Left lung (tissue), 14 donors: ENCODE measurements at regions of chr2 and their contacts with region 1.

Region 1: GRCh38 chr2:26144953-26145680 is 27.8 kb upstream of the GAREM2 start:
- DNase-seq: peak in 3 of 4 donors; percentile 47 to 64 (median 49)
- ATAC-seq: peak; percentile 90
- H3K4me3 ChIP-seq: no peak overlapping the region
- H3K27ac ChIP-seq: no peak overlapping the region
- H3K4me1 ChIP-seq: peaks cover 0 to 19% of the 10 kb centered on the region in 2 donors
- H3K27me3 ChIP-seq: peaks cover 0 to 27% of the 10 kb centered on the region in 2 donors
- CTCF ChIP-seq: peak; percentile 53 to 70

Region 2: GRCh38 chr2:25951071-25951547 is 194.0 kb before region 1 on chr2:
- intact Hi-C with region 1: loop called in 1 of 2 experiments (anchors 10 kb)
- DNase-seq: peak; percentile 57 to 92 (median 82)
- ATAC-seq: peak; percentile 100
- H3K4me3 ChIP-seq: no peak overlapping the region
- H3K27ac ChIP-seq: no peak overlapping the region
- H3K4me1 ChIP-seq: peaks cover 0 to 6% of the 10 kb centered on the region in 2 donors
- H3K27me3 ChIP-seq: no peaks in the 10 kb centered on the region
- CTCF ChIP-seq: peak; percentile 90 to 95

Region 3: GRCh38 chr2:25976983-25977741 is 168.0 kb before region 1 on chr2:
- intact Hi-C with region 1: no loop called
- DNase-seq: no peak
- ATAC-seq: no peak
- H3K4me3 ChIP-seq: no peak overlapping the region
- H3K27ac ChIP-seq: no peak overlapping the region
- H3K4me1 ChIP-seq: peaks cover 6 to 12% of the 10 kb centered on the region in 2 donors
- H3K27me3 ChIP-seq: no peaks in the 10 kb centered on the region
- CTCF ChIP-seq: no peak

Region 4: DNA sequence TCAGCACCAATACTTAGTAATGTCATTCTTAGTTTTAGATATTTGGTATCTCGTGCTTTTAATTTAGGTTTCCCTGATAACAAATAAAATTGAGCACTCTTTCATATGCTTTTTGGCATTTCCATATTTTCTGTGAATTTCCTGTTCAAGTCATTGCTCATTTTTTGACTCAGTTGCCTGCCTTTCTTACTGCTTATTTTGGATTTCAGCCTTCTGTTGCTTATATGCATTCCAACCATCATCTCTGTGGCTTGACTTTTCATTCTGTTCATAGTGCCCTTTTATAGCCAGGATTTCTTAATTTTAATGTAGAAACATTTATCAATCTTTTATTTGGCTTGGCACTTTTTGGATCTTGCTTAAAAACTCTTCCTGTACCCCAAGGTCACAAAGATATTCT is 148.3 kb before region 1 on chr2:
- intact Hi-C with region 1: loop called in 1 of 2 experiments (anchors 5 kb)
- DNase-seq: no peak
- ATAC-seq: no peak
- H3K4me3 ChIP-seq: no peak overlapping the region
- H3K27ac ChIP-seq: no peak overlapping the region
- H3K4me1 ChIP-seq: peaks cover 7 to 54% of the 10 kb centered on the region in 2 donors
- H3K27me3 ChIP-seq: no peaks in the 10 kb centered on the region
- CTCF ChIP-seq: no peak